ENCODE measurements at regions of chr14 and their contacts with region 1.

Region 1: DNA sequence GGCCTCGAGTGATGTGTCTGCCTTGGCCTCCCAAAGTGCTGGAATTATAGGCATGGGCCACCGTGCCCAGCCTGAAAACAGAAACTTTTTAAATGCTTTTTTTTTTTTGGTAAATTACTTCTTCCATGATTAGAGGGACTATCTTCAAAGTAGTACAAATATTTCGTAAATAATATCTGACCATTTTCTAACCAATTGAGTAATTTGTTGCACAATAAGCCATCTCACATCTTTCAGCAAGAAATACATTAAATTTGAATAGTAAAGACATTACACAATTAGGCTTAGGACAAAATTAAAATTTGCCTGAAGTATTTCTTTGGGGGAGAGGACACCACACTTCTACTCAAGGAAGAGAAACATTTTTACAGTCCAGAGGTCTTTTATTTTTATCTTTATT is 84.7 kb upstream of the STRN3 start:
- DNase-seq: no peak
- ATAC-seq: no peak
- H3K4me3 ChIP-seq: no peak overlapping the region
- H3K27ac ChIP-seq: no peak overlapping the region
- H3K4me1 ChIP-seq: peaks cover 0 to 3% of the 10 kb centered on the region in 2 experiments; a peak in 1 of 4 replicates
- H3K27me3 ChIP-seq: no peaks in the 10 kb centered on the region
- CTCF ChIP-seq: no peak
- POLR2A ChIP-seq: no peak
- RAD21 ChIP-seq: no peak

Region 2: GRCh38 chr14:30064454-30064853 is 1046.4 kb before region 1 on chr14:
- CTCF ChIA-PET with region 1: no interaction called
- POLR2A ChIA-PET with region 1: no interaction called
- RAD21 ChIA-PET with region 1: no interaction called
- intact Hi-C with region 1: no loop called
- DNase-seq: no peak
- ATAC-seq: no peak
- H3K4me3 ChIP-seq: no peak overlapping the region
- H3K27ac ChIP-seq: no peak overlapping the region
- H3K4me1 ChIP-seq: no peaks in the 10 kb centered on the region
- H3K27me3 ChIP-seq: no peaks in the 10 kb centered on the region
- CTCF ChIP-seq: no peak
- POLR2A ChIP-seq: no peak
- RAD21 ChIP-seq: no peak

Region 3: DNA sequence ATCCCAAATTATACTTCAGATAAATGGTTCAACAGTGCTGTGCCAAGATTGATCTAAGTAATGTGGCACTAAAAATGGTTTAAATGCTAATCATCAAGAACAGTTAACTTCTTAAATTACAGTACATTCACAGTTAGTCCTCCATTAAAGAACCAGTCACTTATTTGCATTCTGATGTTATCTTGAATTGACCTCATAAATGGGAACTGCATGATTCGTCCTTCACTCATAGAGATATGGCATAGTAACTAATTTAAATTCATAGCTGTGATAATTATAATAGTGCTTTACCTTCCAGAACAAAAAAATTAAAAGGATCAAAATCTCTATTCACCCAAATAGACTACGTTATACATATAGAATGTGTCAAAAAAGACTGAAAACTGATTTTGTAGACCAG is 175.4 kb before region 1 on chr14:
- CTCF ChIA-PET with region 1: no interaction called
- POLR2A ChIA-PET with region 1: no interaction called
- RAD21 ChIA-PET with region 1: no interaction called
- intact Hi-C with region 1: no loop called
- DNase-seq: no peak
- ATAC-seq: no peak
- H3K4me3 ChIP-seq: no peak overlapping the region
- H3K27ac ChIP-seq: no peak overlapping the region
- H3K4me1 ChIP-seq: no peaks in the 10 kb centered on the region
- H3K27me3 ChIP-seq: no peaks in the 10 kb centered on the region
- CTCF ChIP-seq: no peak
- POLR2A ChIP-seq: no peak
- RAD21 ChIP-seq: no peak

Region 4: DNA sequence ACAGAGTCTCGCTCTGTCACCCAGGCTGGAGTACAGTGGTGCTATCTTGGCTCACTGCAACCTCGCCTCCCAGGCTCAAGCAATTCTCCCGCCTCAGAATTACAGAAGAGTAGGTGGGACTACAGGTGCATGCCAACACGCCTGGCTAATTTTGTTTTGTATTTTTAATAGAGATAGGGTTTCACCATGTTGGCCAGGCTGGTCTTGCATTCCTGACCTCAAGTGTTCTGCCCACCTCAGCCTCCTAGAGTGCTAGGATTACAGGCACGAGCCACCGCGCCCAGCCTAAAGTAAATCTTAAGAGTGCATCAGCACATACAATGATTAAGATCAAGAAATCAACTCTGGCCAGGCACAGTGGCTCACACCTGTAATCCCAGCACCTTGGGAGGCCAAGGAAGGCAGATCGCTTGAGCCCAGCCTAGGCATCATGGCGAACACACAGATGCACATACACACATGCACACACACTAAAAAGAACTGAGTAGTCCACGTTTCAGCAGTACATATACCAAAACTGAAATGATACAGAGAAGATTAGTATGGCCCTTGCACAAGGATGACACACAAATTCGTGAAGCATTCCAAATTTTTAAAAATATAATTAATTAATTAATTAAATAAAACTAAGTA is 31.7 kb after region 1 on chr14:
- CTCF ChIA-PET with region 1: no interaction called
- POLR2A ChIA-PET with region 1: no interaction called
- RAD21 ChIA-PET with region 1: no interaction called
- intact Hi-C with region 1: loop called (anchors 2 kb)
- DNase-seq: no peak
- ATAC-seq: no peak
- H3K4me3 ChIP-seq: no peak overlapping the region
- H3K27ac ChIP-seq: no peak overlapping the region
- H3K4me1 ChIP-seq: peaks cover 6 to 12% of the 10 kb centered on the region in 2 experiments
- H3K27me3 ChIP-seq: no peaks in the 10 kb centered on the region
- CTCF ChIP-seq: no peak
- POLR2A ChIP-seq: no peak
- RAD21 ChIP-seq: no peak